CD14-positive monocyte (primary cell): ENCODE measurements at regions of chr6 and their contacts with region 1.

Region 1: DNA sequence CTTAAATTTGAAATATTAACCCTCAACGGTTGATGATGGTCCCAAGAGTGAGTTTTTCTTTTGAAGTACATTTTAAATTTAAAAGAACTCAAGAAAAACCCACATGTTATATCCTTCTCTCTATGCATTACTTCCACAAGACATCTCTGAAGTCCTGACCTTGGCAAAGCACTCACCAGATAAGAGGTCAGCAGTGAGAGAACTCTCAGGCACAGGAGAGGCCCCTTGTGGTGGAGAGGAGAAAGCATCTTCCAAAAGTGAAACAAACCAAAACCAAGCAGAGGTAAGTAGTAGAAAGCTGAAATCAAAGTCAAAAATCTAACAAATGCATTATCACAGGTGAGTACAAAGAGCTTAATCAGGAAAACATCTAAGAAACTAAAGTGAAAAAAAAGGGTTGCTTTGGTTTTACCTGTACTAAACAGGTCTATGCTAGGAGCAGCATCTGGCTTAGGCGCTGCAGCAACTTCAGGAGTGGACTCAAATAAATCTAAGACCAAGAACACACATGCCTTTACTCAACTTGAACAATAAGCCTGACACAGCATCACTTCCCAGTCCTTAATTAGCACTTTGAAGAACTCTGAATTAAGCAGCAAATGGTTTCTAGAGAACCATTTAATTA is 80.5 kb downstream of the PRSS35 start:
- DNase-seq: peak; percentile 27 to 57 (median 50)
- H3K4me3 ChIP-seq: no peak overlapping the region
- H3K4me3 Mint-ChIP-seq: peak overlapping the region in 1 of 2 donors; percentile 39
- H3K27ac ChIP-seq: no peak overlapping the region
- H3K27ac Mint-ChIP-seq: peak overlapping the region in 4 of 7 donors; percentile 8 to 65 (median 34)
- H3K4me1 ChIP-seq: peaks cover 17 to 18% of the 10 kb centered on the region in 2 donors
- H3K4me1 Mint-ChIP-seq: peaks cover 22% of the 10 kb centered on the region
- H3K27me3 ChIP-seq: no peaks in the 10 kb centered on the region
- H3K27me3 Mint-ChIP-seq: peaks cover 0 to 2% (median 1%) of the 10 kb centered on the region in 3 donors
- CTCF ChIP-seq: peak; percentile 78

Region 2: DNA sequence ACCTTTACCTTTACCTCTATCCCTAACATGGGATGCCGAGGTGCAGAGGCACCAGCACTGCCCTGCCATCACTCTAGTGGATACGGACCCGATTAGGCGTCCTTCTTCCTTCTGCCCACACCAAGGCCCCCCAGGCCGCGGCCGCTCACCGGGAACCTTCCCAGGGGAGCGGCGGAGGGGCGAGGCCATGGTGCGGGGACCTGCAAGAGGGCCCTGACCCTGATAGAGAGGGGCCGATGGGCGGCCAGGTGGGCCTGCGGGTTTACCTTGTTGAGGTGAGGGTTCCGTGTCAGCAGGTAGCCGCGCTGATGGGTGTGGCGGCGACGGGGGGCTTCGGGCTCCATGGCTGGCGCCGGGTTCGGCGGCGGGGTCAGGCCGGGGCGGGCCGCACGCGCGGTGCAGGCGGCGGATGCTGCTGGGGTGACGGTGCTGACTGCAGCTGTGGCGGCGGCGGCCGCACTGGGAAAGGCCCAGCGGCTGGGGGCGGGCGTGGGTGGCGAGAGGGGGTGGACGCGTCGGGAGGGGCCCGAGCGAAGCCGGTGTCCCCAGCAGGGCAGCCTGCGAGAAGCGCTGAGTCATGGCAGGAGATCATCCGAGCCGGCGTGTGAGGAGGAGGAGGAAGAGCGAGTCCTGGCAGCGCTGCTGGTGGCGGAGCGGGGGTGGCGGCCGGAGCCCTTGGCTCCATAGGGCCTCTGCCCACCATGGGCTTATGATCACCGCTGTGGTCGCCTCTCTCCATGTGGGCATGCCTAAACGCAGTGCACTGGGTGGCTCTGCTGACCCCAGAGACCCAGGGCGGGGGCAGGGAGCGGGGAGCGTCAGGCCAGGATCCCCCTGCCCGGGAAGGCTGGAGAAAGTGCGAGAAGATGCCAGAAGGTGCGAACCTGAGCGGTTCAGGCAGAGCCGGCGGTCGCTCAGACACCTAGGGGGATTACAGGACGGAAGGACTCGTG is 162.0 kb before region 1 on chr6 and contains the start of gene ME1:
- intact Hi-C with region 1: loop called in 1 of 2 experiments (anchors 10 kb)
- DNase-seq: peak; percentile 79 to 94 (median 84)
- H3K4me3 ChIP-seq: peak within 1 kb of the TSS; percentile 30 to 74 (median 31)
- H3K4me3 Mint-ChIP-seq: peak within 1 kb of the TSS; percentile 75 to 91
- H3K27ac ChIP-seq: peak within 1 kb of the TSS in 1 of 2 donors; percentile 52
- H3K27ac Mint-ChIP-seq: peak within 1 kb of the TSS in 5 of 7 donors; percentile 59 to 78 (median 68)
- H3K4me1 ChIP-seq: peaks cover 31 to 51% of the 10 kb centered on the region in 2 donors
- H3K4me1 Mint-ChIP-seq: peaks cover 35% of the 10 kb centered on the region
- H3K27me3 ChIP-seq: peaks cover 12 to 19% of the 10 kb centered on the region in 2 donors
- H3K27me3 Mint-ChIP-seq: peaks cover 16 to 30% (median 18%) of the 10 kb centered on the region in 3 donors
- CTCF ChIP-seq: no peak
- polyA plus RNA-seq, gene ME1: 1.3 to 4.0 (median 2.1) TPM

Region 3: GRCh38 chr6:83677791-83678190 is 84.9 kb after region 1 on chr6:
- intact Hi-C with region 1: no loop called
- DNase-seq: no peak
- H3K4me3 ChIP-seq: no peak overlapping the region
- H3K4me3 Mint-ChIP-seq: no peak overlapping the region
- H3K27ac ChIP-seq: no peak overlapping the region
- H3K27ac Mint-ChIP-seq: no peak overlapping the region
- H3K4me1 ChIP-seq: no peaks in the 10 kb centered on the region
- H3K4me1 Mint-ChIP-seq: no peaks in the 10 kb centered on the region
- H3K27me3 ChIP-seq: no peaks in the 10 kb centered on the region
- H3K27me3 Mint-ChIP-seq: no peaks in the 10 kb centered on the region
- CTCF ChIP-seq: no peak

Region 4: DNA sequence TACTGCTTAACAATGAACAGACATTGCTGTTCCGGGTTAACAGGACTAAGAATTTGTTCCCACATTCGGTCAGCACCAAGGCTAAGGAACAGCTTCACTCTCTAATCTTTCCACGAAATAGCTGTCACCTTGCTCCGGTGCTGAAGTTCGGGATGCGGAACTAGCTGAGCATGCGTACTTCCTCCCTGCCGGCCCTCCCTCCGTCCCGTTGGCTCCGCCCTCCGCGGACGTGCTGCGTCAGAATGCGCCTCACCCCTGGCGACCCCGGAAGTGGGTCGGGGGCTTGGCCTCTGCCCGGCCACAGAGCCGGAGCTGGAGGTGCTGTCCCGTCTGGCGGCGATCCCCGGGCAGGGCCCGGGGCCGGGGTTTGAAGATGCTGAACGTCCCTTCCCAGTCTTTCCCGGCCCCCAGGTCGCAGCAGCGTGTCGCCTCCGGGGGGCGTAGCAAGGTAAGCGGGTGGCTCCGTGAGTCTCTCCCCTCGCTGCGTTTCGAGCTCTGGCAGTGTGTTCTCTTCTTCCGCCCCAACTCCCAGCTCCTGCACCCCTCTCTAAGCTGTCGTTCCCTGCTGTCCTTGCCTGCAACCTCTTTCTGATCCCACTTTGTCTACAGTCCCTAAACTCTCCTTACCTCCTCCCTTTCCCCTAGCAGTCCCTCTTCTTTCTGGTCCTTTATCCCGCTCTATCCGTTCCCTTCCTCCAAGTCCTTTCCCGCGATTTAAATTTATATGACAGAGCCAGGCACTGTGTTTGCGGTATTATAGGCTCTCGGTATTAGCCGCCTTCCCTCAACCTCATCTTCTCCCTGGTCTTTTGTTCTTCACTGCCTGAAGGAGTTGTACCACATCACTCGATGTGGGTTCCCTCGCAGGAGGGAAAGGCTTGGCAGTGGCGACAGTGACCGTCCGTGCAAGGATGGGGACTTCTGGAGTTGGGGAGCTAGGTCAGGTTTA is 266.8 kb after region 1 on chr6 and contains the start of gene CYB5R4:
- intact Hi-C with region 1: loop called in 1 of 2 experiments (anchors 10 kb)
- DNase-seq: peak; percentile 91 to 93 (median 93)
- H3K4me3 ChIP-seq: peak within 1 kb of the TSS; percentile 93 to 98 (median 94)
- H3K4me3 Mint-ChIP-seq: peak within 1 kb of the TSS; percentile 95 to 100
- H3K27ac ChIP-seq: peak within 1 kb of the TSS; percentile 88 to 89
- H3K27ac Mint-ChIP-seq: peak within 1 kb of the TSS; percentile 94 to 98 (median 97)
- H3K4me1 ChIP-seq: peaks cover 18 to 23% of the 10 kb centered on the region in 2 donors
- H3K4me1 Mint-ChIP-seq: peaks cover 23% of the 10 kb centered on the region
- H3K27me3 ChIP-seq: peaks cover 25 to 38% of the 10 kb centered on the region in 2 donors
- H3K27me3 Mint-ChIP-seq: peaks cover 14 to 20% (median 17%) of the 10 kb centered on the region in 3 donors
- CTCF ChIP-seq: no peak
- polyA plus RNA-seq, gene CYB5R4: 30.5 to 120 (median 116) TPM